ENCODE measurements at regions of chr3 and their contacts with region 1.

Region 1: GRCh38 chr3:120558771-120559241 is 37.3 kb upstream of the NDUFB4 start:
- DNase-seq: peak; percentile 83
- CTCF ChIP-seq: peak; percentile 97

Region 2: DNA sequence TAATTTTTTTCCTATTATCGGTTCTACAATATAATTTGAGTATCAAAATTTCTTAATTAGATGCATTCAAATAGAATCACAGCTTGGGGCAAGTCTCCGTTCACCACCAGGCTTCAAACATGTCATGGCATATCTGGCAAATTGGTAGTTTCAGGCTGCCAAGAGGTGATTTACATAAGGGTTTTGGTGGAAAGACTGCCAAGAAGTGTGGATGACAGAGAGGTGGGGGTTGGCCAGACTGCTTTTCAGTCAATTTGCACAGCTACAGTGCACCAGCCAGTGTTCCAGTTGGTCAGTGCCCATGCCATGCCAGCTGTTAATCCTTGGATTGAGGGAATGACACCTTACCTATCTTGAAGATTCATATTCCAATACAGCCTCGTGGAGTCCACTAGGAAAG is 456.1 kb before region 1 on chr3:
- in situ Hi-C with region 1: no loop called
- DNase-seq: no peak
- CTCF ChIP-seq: no peak

Region 3: GRCh38 chr3:120274739-120275167 is 284.1 kb before region 1 on chr3:
- in situ Hi-C with region 1: loop called (anchors 25 kb)
- DNase-seq: no peak
- CTCF ChIP-seq: no peak

Region 4: DNA sequence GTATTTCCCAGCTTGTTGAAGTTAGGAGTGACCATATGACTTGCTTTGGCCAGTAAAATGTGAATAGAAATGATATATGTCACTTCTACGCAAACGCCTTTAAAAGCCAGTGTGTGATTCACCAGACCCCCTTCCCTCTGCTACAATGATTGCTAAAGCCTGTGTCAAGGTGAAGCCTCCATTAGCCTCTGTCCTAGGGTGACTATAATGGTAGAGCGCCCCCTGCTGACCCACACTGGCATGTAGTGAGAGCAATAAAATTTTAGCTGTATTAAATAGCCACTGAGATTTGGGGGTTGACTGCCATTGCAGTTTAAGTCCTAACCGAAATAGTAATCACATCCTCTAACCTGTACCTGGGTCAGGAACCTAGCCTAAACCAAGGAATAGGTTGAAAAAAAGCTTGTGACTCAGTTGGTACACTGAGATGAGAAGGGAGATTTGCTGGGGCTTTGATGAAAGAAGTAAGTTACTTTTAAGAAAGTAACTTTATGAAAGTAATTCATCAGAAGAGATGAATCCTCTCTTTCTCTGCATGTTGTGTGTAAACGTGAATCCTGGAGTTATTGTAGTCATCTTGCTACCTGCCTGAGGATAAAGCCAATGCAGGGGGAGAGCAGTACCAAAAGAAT is 236.3 kb after region 1 on chr3:
- in situ Hi-C with region 1: loop called (anchors 5 kb)
- DNase-seq: peak; percentile 16
- CTCF ChIP-seq: peak; percentile 85

Measured in GM13976 (cell line).